Transverse colon (tissue), 4 donors: ENCODE measurements at regions of chr12 and their contacts with region 1.

Region 1: GRCh38 chr12:4526923-4527546 is 11.7 kb upstream of the RAD51AP1 start:
- DNase-seq: no peak
- H3K4me3 ChIP-seq: no peak overlapping the region
- H3K27ac ChIP-seq: no peak overlapping the region
- H3K4me1 ChIP-seq: no peaks in the 10 kb centered on the region
- H3K27me3 ChIP-seq: no peaks in the 10 kb centered on the region
- CTCF ChIP-seq: peak; percentile 61 to 68 (median 63)
- EP300 ChIP-seq: no peak
- POLR2A ChIP-seq: no peak

Region 2: GRCh38 chr12:4307593-4308333 is 219.3 kb before region 1 on chr12:
- in situ Hi-C with region 1: loop called in 3 of 4 experiments (anchors 10 to 25 kb)
- intact Hi-C with region 1: no loop called
- DNase-seq: peak; percentile 80
- H3K4me3 ChIP-seq: no peak overlapping the region
- H3K27ac ChIP-seq: peak overlapping the region; percentile 45 to 55 (median 53)
- H3K4me1 ChIP-seq: peaks cover 17 to 39% (median 32%) of the 10 kb centered on the region in 4 donors
- H3K27me3 ChIP-seq: no peaks in the 10 kb centered on the region
- CTCF ChIP-seq: peak; percentile 67 to 88 (median 70)
- EP300 ChIP-seq: no peak
- POLR2A ChIP-seq: no peak

Region 3: DNA sequence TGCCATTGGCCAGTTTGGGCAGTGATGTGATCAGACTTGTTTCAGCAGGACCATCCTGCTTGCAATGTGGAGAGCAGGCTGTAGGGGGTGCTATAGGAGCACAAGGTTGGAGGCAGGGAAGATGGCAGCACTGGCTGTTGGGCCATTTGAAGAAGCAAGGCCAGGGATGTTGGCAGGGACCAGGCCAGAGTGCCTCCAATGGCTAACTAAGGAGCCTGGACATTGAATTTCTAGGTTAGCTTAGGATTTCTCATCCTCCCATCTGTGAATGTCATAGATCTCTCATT is 171.1 kb before region 1 on chr12:
- in situ Hi-C with region 1: no loop called
- intact Hi-C with region 1: loop called (anchors 10 kb)
- DNase-seq: peak; percentile 24
- H3K4me3 ChIP-seq: no peak overlapping the region
- H3K27ac ChIP-seq: no peak overlapping the region
- H3K4me1 ChIP-seq: no peaks in the 10 kb centered on the region
- H3K27me3 ChIP-seq: no peaks in the 10 kb centered on the region
- CTCF ChIP-seq: peak in 4 of 5 experiments; percentile 19 to 30 (median 26)
- EP300 ChIP-seq: no peak
- POLR2A ChIP-seq: no peak

Region 4: GRCh38 chr12:4392223-4392742 is 134.8 kb before region 1 on chr12:
- in situ Hi-C with region 1: no loop called
- intact Hi-C with region 1: no loop called
- DNase-seq: no peak
- H3K4me3 ChIP-seq: no peak overlapping the region
- H3K27ac ChIP-seq: no peak overlapping the region
- H3K4me1 ChIP-seq: no peaks in the 10 kb centered on the region
- H3K27me3 ChIP-seq: no peaks in the 10 kb centered on the region
- CTCF ChIP-seq: no peak
- EP300 ChIP-seq: no peak
- POLR2A ChIP-seq: no peak

Region 5: GRCh38 chr12:4771960-4772566 is 245.0 kb after region 1 on chr12:
- in situ Hi-C with region 1: no loop called
- intact Hi-C with region 1: no loop called
- DNase-seq: no peak
- H3K4me3 ChIP-seq: no peak overlapping the region
- H3K27ac ChIP-seq: no peak overlapping the region
- H3K4me1 ChIP-seq: no peaks in the 10 kb centered on the region
- H3K27me3 ChIP-seq: no peaks in the 10 kb centered on the region
- CTCF ChIP-seq: no peak
- EP300 ChIP-seq: no peak
- POLR2A ChIP-seq: no peak